ENCODE measurements at regions of chr10 and their contacts with region 1.

Region 1: GRCh38 chr10:85873063-85873462 is 493.5 kb downstream of the GRID1 start:
- DNase-seq: no peak
- ATAC-seq: no peak
- H3K4me3 ChIP-seq: no peak overlapping the region
- H3K27ac ChIP-seq: no peak overlapping the region
- H3K4me1 ChIP-seq: no peaks in the 10 kb centered on the region
- H3K27me3 ChIP-seq: no peaks in the 10 kb centered on the region
- CTCF ChIP-seq: no peak
- POLR2A ChIP-seq: no peak

Region 2: DNA sequence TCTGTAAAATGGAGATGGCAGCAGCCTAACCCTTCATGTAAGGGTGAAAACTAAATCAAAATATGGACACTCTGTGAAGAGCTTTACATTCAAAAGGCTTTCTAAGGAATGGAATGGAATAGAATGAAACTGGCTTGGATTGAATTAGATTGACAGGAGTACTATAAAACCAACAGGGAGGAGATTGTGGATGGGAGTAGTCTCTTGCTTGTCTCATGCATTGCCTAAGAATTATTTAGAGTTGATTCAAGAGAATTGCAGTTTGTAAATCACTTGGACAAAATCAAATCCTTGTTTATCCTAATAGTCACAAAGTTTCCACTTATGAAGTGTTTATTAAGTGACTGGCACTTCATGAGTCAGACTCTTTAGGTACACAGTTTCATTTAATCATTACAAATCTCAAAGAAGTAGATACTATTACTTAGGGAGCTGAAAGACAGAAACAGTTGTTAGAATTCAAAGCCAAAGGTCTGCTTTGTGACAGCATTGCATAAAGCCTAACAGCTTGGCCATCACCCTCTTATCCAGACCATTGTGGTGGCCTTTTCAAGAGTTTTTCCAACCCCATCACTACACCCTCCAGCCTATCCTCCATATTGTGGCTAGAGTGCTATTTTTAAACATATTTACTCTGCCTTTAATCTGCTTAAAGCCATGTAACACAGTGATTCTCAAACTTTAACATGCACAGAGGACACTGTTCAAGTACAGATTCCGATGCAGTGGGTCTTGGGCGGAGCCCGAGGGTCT is 1825.6 kb before region 1 on chr10:
- in situ Hi-C with region 1: no loop called
- intact Hi-C with region 1: loop called (anchors 5 kb)
- DNase-seq: no peak
- ATAC-seq: no peak
- H3K4me3 ChIP-seq: no peak overlapping the region
- H3K27ac ChIP-seq: no peak overlapping the region
- H3K4me1 ChIP-seq: no peaks in the 10 kb centered on the region
- H3K27me3 ChIP-seq: no peaks in the 10 kb centered on the region
- CTCF ChIP-seq: no peak
- POLR2A ChIP-seq: no peak

Region 3: DNA sequence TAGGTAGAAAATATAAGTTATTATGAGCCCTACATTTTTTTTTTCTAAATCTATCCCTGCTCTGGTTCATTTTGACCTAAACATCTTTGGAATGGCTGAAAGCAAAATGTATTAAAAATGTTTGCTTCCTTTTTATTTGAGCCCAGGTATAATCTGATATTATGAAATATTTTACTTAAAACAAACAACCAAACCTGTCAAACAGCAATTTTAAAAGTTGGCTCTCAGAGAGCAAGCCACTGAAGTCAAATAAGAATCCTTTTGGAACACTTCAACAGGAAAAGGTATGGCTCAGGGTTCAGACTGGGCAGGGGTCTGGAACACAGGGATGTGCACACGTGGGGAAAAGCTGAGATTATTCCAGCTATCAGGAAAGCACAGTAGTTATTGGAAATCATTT is 761.8 kb before region 1 on chr10:
- in situ Hi-C with region 1: no loop called
- intact Hi-C with region 1: no loop called
- DNase-seq: no peak
- ATAC-seq: no peak
- H3K4me3 ChIP-seq: no peak overlapping the region
- H3K27ac ChIP-seq: no peak overlapping the region
- H3K4me1 ChIP-seq: no peaks in the 10 kb centered on the region
- H3K27me3 ChIP-seq: no peaks in the 10 kb centered on the region
- CTCF ChIP-seq: no peak
- POLR2A ChIP-seq: no peak

Region 4: DNA sequence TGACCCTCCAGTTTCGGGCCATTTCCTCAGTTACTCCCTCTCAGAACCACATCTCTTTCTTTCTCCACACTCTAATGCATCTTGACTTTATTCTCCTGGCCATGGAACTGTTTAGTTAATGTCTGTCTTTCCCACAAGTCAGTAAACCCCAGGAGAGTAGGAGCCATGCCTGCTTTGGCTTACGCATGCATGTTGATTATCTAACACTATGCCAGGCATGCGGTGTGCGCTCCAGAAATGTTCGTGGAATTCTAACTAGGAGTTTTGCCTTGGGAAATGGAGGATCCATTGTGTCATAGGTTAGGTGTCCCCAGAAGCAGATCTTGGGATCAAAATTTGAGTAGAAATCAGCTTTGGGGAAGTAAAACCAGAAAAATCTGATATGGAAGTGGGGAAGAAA is 184.6 kb after region 1 on chr10:
- in situ Hi-C with region 1: no loop called
- intact Hi-C with region 1: no loop called
- DNase-seq: no peak
- ATAC-seq: no peak
- H3K4me3 ChIP-seq: no peak overlapping the region
- H3K27ac ChIP-seq: no peak overlapping the region
- H3K4me1 ChIP-seq: no peaks in the 10 kb centered on the region
- H3K27me3 ChIP-seq: peaks cover 0 to 10% (median 0%) of the 10 kb centered on the region in 3 donors
- CTCF ChIP-seq: no peak
- POLR2A ChIP-seq: no peak

Measured in gastrocnemius medialis (tissue), 4 donors.